Heart right ventricle (tissue), 16 donors: ENCODE measurements at regions of chr3 and their contacts with region 1.

Region 1: DNA sequence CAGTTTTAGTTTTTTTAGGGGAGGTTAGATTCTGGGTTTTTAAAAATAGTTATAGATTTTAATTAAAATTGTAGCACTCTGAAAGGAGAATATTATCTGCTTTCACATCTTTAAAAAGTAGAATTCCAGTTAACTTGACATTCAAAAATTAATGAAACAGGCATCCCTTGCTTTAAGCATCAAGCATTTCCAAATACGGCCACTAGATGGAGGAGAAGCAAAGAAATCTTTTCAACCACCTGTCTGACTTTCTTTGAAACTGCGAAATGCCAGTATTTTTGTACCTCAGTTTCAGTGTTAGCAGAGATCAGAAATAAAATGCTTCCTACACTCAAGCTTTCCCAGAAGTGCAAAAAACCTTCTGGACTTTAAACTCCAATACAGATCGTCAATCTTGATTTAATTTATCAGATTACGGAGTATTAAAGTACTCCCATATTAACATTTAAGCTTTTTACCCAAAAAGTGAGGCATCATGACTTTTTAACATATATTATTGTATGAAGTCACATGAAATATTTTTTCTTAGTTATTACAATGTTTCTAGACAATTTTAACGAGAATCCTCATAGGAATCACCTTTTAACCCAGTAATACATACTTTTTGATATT is 153.3 kb downstream of the P3H2 start:
- DNase-seq: peak in 1 of 2 donors; percentile 39
- ATAC-seq: no peak
- H3K4me3 ChIP-seq: no peak overlapping the region
- H3K27ac ChIP-seq: no peak overlapping the region
- H3K4me1 ChIP-seq: peaks cover 0 to under 1% (median 0%) of the 10 kb centered on the region in 9 donors
- H3K27me3 ChIP-seq: no peaks in the 10 kb centered on the region
- CTCF ChIP-seq: peak; percentile 71 to 91 (median 84)

Region 2: GRCh38 chr3:189898559-189899153 is 68.7 kb before region 1 on chr3:
- intact Hi-C with region 1: no loop called
- DNase-seq: no peak
- ATAC-seq: no peak
- H3K4me3 ChIP-seq: no peak overlapping the region
- H3K27ac ChIP-seq: no peak overlapping the region
- H3K4me1 ChIP-seq: peaks cover 0 to 1% (median 0%) of the 10 kb centered on the region in 9 donors
- H3K27me3 ChIP-seq: no peaks in the 10 kb centered on the region
- CTCF ChIP-seq: no peak

Region 3: GRCh38 chr3:190120269-190121060 is 153.1 kb after region 1 on chr3 and contains the start of gene P3H2:
- intact Hi-C with region 1: loop called in 7 of 10 experiments (anchors 5 to 10 kb)
- DNase-seq: peak; percentile 76 to 80
- ATAC-seq: peak; percentile 98 to 100 (median 99)
- H3K4me3 ChIP-seq: peak within 1 kb of the TSS; percentile 36 to 89 (median 70)
- H3K27ac ChIP-seq: peak within 1 kb of the TSS in 7 of 10 donors; percentile 52 to 77 (median 72)
- H3K4me1 ChIP-seq: peaks cover 2 to 17% (median 7%) of the 10 kb centered on the region in 9 donors
- H3K27me3 ChIP-seq: peaks cover 0 to 57% (median 8%) of the 10 kb centered on the region in 7 donors
- CTCF ChIP-seq: peak in 8 of 9 donors; percentile 17 to 72 (median 56)
- total RNA-seq, gene P3H2: 0.49 to 28.8 (median 4.4) TPM

Region 4: GRCh38 chr3:190205739-190206138 is 238.4 kb after region 1 on chr3:
- intact Hi-C with region 1: loop called (anchors 2 to 5 kb)
- DNase-seq: no peak
- ATAC-seq: no peak
- H3K4me3 ChIP-seq: no peak overlapping the region
- H3K27ac ChIP-seq: no peak overlapping the region
- H3K4me1 ChIP-seq: peaks cover 0 to 10% (median 0%) of the 10 kb centered on the region in 9 donors
- H3K27me3 ChIP-seq: no peaks in the 10 kb centered on the region
- CTCF ChIP-seq: no peak

Region 5: GRCh38 chr3:190321789-190322603 is 354.6 kb after region 1 on chr3 and contains the start of gene CLDN1:
- intact Hi-C with region 1: loop called in 8 of 10 experiments (anchors 1 to 10 kb)
- DNase-seq: peak; percentile 72 to 81
- ATAC-seq: peak; percentile 89 to 96 (median 94)
- H3K4me3 ChIP-seq: peak within 1 kb of the TSS; percentile 38 to 68 (median 58)
- H3K27ac ChIP-seq: no peak within 1 kb of the TSS
- H3K4me1 ChIP-seq: peaks cover 0 to 25% (median 12%) of the 10 kb centered on the region in 9 donors
- H3K27me3 ChIP-seq: peaks cover 0 to 33% (median 13%) of the 10 kb centered on the region in 7 donors
- CTCF ChIP-seq: peak in 8 of 9 donors; percentile 91 to 99 (median 96)
- total RNA-seq, gene CLDN1: 0.10 to 0.78 (median 0.17) TPM in 8 of 10 donors, not detected in the others

Region 6: GRCh38 chr3:190384241-190384863 is 417.0 kb after region 1 on chr3:
- intact Hi-C with region 1: loop called in 1 of 10 experiments (anchors 5 kb)
- DNase-seq: peak in 1 of 2 donors; percentile 23
- ATAC-seq: peak in 7 of 8 donors; percentile 33 to 90 (median 78)
- H3K4me3 ChIP-seq: no peak overlapping the region
- H3K27ac ChIP-seq: no peak overlapping the region
- H3K4me1 ChIP-seq: no peaks in the 10 kb centered on the region
- H3K27me3 ChIP-seq: peaks cover 0 to 5% (median 0%) of the 10 kb centered on the region in 7 donors
- CTCF ChIP-seq: peak; percentile 22 to 67 (median 51)